MCF 10A (cell line): ENCODE measurements at regions of chr14 and their contacts with region 1.

Region 1: GRCh38 chr14:35398071-35398632 is 6.4 kb downstream of the NFKBIA start:
- DNase-seq: no peak
- H3K4me3 Mint-ChIP-seq: no peak overlapping the region
- H3K27ac Mint-ChIP-seq: peak overlapping the region; percentile 84
- H3K4me1 Mint-ChIP-seq: peaks cover 31% of the 10 kb centered on the region
- H3K27me3 Mint-ChIP-seq: no peaks in the 10 kb centered on the region
- CTCF ChIP-seq: no peak

Region 2: DNA sequence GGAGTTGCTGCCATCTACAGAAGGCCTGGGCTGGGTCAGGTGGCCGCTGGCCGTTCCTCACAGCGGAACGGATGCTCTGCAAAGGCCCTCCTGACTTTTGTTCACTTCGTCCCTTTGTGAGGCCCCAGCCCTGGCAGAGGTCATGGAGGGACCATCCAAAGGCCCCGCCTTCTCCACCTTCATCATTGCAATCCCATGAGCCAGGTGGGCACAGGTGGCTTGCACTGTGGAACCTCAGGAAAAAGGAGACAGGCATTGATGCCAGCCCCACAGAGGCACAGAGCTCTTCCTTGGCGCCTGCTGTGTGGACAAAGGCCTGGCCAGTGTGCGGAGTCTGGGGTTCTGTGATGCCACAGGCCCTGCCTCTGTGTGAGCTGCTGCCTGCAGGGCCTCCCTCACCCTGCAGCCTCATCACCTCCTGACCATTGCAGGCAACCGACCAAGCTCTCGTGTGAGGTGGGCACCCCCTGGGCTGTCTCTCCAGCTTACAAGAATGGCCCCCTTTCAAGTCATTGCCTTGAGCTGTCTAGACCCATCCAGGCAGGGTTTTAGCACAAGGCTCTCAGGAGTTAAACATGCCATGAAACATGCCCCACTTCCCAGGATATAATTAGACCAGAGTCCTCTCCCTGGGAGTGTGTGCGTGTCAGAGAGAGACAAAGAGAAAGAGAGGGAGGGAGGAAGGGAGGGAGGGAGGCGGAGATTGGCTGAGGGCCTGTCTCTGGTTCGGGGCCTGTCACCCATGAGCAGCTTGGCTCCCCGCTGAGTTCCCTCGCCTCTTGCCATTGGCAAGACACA is 12.9 kb before region 1 on chr14:
- CTCF ChIA-PET with region 1: interaction called, 14 read pairs
- POLR2A ChIA-PET with region 1: interaction called, 49 read pairs
- intact Hi-C with region 1: no loop called
- DNase-seq: peak; percentile 93
- H3K4me3 Mint-ChIP-seq: no peak overlapping the region
- H3K27ac Mint-ChIP-seq: peak overlapping the region; percentile 76
- H3K4me1 Mint-ChIP-seq: peaks cover 20% of the 10 kb centered on the region
- H3K27me3 Mint-ChIP-seq: no peaks in the 10 kb centered on the region
- CTCF ChIP-seq: no peak

Region 3: GRCh38 chr14:35470755-35471154 is 72.6 kb after region 1 on chr14:
- CTCF ChIA-PET with region 1: no interaction called
- POLR2A ChIA-PET with region 1: no interaction called
- intact Hi-C with region 1: no loop called
- DNase-seq: peak; percentile 31
- H3K4me3 Mint-ChIP-seq: no peak overlapping the region
- H3K27ac Mint-ChIP-seq: no peak overlapping the region
- H3K4me1 Mint-ChIP-seq: no peaks in the 10 kb centered on the region
- H3K27me3 Mint-ChIP-seq: peaks cover 77% of the 10 kb centered on the region
- CTCF ChIP-seq: no peak

Region 4: DNA sequence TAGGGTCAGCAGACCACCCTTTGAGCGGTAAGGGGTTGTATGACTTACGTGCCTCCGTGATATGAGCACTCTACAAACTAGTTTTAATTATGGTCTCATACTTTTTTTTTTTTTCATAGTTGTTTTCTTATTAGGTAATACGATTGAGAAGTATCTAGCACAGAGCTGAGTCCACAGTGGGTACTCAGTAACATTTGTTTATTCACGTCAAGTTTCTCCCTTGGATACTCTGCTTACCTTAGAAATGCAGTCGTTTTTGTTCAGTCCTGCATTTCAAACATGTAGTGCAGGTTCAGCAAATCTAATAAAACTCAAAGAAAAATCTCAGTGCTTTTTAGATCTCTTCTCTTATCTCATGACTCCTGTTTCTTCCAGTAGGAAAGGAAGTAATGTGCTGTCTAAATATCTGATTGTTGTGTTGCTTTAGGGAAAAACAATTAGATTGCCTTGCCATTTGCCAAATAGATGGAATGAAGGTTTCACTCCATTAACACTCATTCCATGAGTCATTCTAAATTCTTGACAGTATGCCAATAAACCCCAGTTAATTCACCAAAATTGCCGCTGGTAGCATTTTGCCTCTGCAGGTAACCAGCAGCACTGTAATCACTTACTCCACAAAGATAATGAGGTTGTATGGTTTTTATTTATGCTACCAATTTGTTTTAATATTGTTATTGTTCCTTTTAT is 659.4 kb after region 1 on chr14:
- CTCF ChIA-PET with region 1: no interaction called
- POLR2A ChIA-PET with region 1: no interaction called
- intact Hi-C with region 1: no loop called
- DNase-seq: peak; percentile 78
- H3K4me3 Mint-ChIP-seq: peak overlapping the region; percentile 11
- H3K27ac Mint-ChIP-seq: peak overlapping the region; percentile 57
- H3K4me1 Mint-ChIP-seq: peaks cover 26% of the 10 kb centered on the region
- H3K27me3 Mint-ChIP-seq: no peaks in the 10 kb centered on the region
- CTCF ChIP-seq: no peak